PC-9 (cell line): ENCODE measurements at regions of chr7 and their contacts with region 1.

Region 1: GRCh38 chr7:114273218-114273617 is 141.4 kb upstream of the FOXP2 start:
- DNase-seq: no peak
- H3K4me3 ChIP-seq: no peak overlapping the region
- H3K27ac ChIP-seq: no peak overlapping the region
- H3K4me1 ChIP-seq: no peaks in the 10 kb centered on the region
- H3K27me3 ChIP-seq: no peaks in the 10 kb centered on the region
- CTCF ChIP-seq: no peak

Region 2: DNA sequence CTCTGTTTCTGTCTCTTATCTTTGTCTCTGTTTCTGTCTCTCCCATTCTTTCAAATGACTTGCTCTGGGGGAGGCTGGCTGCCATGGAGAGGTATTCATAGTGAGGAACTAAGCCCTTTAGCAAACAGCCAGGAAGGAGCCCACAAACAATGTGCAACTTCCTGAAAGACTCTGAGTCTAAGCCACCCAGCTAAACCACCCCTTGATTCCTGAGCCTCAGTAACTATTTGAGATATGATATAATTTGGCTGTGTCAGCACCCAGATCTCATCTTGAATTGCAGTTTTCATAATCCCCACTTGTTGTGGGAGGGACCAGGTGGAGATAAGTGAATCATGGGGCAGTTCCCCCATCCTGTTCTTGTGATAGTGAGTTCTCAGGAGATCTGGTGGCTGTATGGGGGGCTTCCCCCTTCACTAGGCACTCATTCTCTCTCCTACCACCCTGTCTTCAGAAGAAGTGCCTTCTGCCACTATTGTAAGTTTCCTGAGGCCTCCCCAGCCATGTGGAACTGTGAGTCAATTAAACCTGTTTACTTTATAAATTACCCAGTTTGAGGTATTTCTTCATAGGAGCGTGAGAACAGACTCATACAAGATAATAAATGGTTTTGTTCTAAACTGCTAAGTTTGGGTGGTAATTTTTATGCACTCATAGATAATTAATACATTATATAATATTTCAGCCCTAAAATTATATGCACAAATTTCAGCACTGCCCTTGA is 20.2 kb after region 1 on chr7:
- CTCF ChIA-PET with region 1: no interaction called
- POLR2A ChIA-PET with region 1: no interaction called
- intact Hi-C with region 1: loop called (anchors 2 kb)
- DNase-seq: no peak
- H3K4me3 ChIP-seq: no peak overlapping the region
- H3K27ac ChIP-seq: no peak overlapping the region
- H3K4me1 ChIP-seq: no peaks in the 10 kb centered on the region
- H3K27me3 ChIP-seq: no peaks in the 10 kb centered on the region
- CTCF ChIP-seq: no peak

Region 3: DNA sequence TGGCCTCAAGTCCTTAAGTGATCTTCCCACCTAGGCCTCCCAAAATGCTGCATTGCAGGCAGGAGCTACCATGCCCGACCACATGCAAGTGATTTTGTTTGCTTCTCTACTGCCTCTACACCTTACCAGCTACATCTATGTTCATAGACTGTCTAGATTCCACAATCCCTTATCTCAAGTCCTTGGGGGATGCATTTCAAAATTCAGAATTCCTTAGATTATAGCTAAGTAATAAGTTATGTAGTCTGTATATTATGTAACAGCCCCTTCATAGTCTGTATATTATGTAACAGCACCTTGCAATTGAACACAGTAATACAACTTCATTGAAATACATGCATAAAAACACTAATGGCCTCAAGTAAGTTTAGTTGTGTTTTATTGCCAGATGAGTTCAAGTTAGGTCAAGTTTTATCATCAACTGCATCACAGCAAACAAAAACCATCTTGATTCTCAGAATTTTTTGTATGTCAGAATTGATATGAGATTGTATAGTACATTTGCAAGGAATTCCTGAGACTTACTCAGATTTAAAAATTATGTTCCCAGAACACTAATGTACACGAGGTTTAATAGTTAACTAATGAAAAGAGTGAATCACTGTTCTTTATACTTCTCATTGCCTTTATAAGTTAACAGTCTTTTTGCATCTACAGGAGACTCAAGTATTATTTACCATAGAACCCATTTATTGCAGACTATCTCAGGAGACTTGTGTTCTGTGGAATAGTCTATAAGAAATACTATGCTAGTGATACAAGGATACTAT is 129.8 kb after region 1 on chr7:
- CTCF ChIA-PET with region 1: no interaction called
- POLR2A ChIA-PET with region 1: no interaction called
- intact Hi-C with region 1: no loop called
- DNase-seq: no peak
- H3K4me3 ChIP-seq: no peak overlapping the region
- H3K27ac ChIP-seq: no peak overlapping the region
- H3K4me1 ChIP-seq: peaks cover 4% of the 10 kb centered on the region
- H3K27me3 ChIP-seq: no peaks in the 10 kb centered on the region
- CTCF ChIP-seq: no peak

Region 4: GRCh38 chr7:114997487-114998404 is 724.5 kb after region 1 on chr7:
- CTCF ChIA-PET with region 1: no interaction called
- POLR2A ChIA-PET with region 1: no interaction called
- intact Hi-C with region 1: no loop called
- DNase-seq: no peak
- H3K4me3 ChIP-seq: no peak overlapping the region
- H3K27ac ChIP-seq: no peak overlapping the region
- H3K4me1 ChIP-seq: no peaks in the 10 kb centered on the region
- H3K27me3 ChIP-seq: no peaks in the 10 kb centered on the region
- CTCF ChIP-seq: no peak